ENCODE measurements at regions of chr19 and their contacts with region 1.

Region 1: GRCh38 chr19:13784731-13785452 is 10.4 kb upstream of the ZSWIM4 start:
- DNase-seq: peak; percentile 62
- ATAC-seq: peak; percentile 70
- H3K4me3 Mint-ChIP-seq: peak overlapping the region; percentile 41
- H3K27ac Mint-ChIP-seq: peak overlapping the region; percentile 76
- H3K4me1 Mint-ChIP-seq: peaks cover 44% of the 10 kb centered on the region
- H3K27me3 Mint-ChIP-seq: no peaks in the 10 kb centered on the region
- CTCF ChIP-seq: no peak

Region 2: GRCh38 chr19:13597640-13598039 is 187.3 kb before region 1 on chr19:
- CTCF ChIA-PET with region 1: interaction called, 3 read pairs
- POLR2A ChIA-PET with region 1: no interaction called
- intact Hi-C with region 1: loop called (anchors 10 kb)
- DNase-seq: no peak
- ATAC-seq: peak; percentile 95
- H3K4me3 Mint-ChIP-seq: no peak overlapping the region
- H3K27ac Mint-ChIP-seq: no peak overlapping the region
- H3K4me1 Mint-ChIP-seq: peaks cover 5% of the 10 kb centered on the region
- H3K27me3 Mint-ChIP-seq: peaks cover 11% of the 10 kb centered on the region
- CTCF ChIP-seq: no peak

Region 3: DNA sequence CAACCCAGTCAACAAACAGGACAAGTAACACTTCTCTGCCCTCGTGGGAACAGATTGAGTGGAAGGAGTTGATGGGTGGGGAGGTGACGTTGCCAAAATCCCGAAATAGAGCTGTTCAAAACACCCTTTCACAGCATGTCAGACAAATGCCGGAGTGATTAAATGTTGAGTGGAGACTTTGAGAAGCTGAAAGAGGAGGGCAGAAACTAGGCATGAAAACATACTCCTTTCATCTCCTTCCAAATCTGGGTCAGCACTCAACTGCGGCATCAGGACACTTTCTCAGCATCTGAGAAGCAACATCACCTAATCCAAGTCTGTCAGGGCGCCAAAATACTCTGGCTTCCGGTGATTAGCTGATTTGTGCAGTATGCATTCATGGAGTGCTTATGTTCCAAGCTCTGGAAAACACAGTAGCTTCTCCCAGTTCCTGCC is 72.1 kb before region 1 on chr19:
- CTCF ChIA-PET with region 1: no interaction called
- POLR2A ChIA-PET with region 1: no interaction called
- intact Hi-C with region 1: no loop called
- DNase-seq: no peak
- ATAC-seq: no peak
- H3K4me3 Mint-ChIP-seq: no peak overlapping the region
- H3K27ac Mint-ChIP-seq: no peak overlapping the region
- H3K4me1 Mint-ChIP-seq: no peaks in the 10 kb centered on the region
- H3K27me3 Mint-ChIP-seq: peaks cover 13% of the 10 kb centered on the region
- CTCF ChIP-seq: no peak

Region 4: DNA sequence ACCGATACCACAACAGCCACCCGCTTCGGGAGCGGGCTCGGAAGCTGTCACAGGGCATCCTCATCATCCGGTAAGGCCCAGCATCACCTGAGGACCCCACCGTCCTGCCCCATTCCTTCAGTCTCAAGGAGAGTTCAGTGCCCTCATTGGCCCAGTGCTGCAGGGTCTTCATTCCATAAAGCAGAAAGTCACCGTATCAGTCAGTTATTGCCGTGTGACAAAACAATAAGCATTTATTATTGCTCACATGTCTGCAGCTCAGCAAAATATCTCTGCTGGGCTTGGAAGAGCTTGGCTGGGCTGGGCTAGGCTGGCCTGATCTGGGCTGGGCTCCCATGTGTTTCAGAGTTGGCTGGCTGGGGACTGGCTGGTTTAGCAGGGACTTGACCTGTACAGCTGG is 28.7 kb before region 1 on chr19:
- CTCF ChIA-PET with region 1: no interaction called
- POLR2A ChIA-PET with region 1: no interaction called
- intact Hi-C with region 1: no loop called
- DNase-seq: no peak
- ATAC-seq: no peak
- H3K4me3 Mint-ChIP-seq: no peak overlapping the region
- H3K27ac Mint-ChIP-seq: no peak overlapping the region
- H3K4me1 Mint-ChIP-seq: no peaks in the 10 kb centered on the region
- H3K27me3 Mint-ChIP-seq: no peaks in the 10 kb centered on the region
- CTCF ChIP-seq: no peak

Region 5: DNA sequence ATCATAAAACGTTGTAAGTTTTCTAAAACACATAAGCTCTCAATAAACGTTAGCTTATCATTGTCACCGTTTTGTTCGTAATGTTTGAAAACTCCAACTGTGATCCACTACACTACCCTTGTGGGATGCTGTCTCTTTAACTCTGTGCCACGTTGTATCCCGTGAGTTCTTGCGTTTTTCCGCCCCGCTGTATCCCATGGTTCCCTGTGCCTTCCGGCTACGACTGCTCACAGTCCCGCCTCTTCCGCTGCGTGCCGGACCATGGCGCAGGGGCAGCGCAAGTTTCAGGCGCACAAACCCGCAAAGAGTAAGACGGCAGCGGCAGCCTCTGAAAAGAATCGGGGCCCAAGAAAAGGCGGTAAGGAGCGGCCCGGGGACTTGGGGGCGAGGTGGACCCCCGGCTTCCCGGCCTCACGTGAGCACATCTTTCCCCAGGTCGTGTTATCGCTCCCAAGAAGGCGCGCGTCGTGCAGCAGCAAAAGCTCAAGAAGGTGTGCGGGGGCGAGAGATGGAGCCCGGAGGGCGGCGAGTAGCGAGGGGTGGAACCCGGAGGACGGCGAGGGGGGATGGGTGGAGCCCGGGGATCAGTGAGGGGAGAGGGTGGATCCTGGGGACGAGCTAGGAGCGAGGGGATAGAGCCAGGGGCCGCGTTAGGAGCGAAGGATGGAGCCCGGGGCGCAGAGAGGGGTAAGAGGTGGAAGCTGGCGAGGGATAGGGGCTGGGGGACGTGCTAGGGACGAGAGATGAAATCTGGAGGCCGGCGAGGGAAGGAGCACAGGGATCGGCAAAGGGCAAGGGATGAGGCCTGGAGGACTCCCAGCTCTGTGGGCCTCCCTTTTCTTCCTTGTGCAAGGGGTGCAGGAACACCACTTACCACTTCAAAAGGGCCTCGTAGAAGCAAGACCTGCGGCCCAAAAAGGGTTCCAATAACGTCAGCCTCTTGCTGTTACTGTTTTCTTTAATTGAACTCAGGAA is 10.4 kb before region 1 on chr19 and contains the start of gene C19orf53:
- CTCF ChIA-PET with region 1: interaction called, 8 read pairs
- POLR2A ChIA-PET with region 1: interaction called, 20 read pairs
- intact Hi-C with region 1: no loop called
- DNase-seq: peak; percentile 86
- ATAC-seq: peak; percentile 99
- H3K4me3 Mint-ChIP-seq: peak within 1 kb of the TSS; percentile 100
- H3K27ac Mint-ChIP-seq: peak within 1 kb of the TSS; percentile 95
- H3K4me1 Mint-ChIP-seq: peaks cover 26% of the 10 kb centered on the region
- H3K27me3 Mint-ChIP-seq: no peaks in the 10 kb centered on the region
- CTCF ChIP-seq: no peak
- total RNA-seq, gene C19orf53: 74.9 and 76.1 TPM in 2 replicates

Region 6: GRCh38 chr19:13825489-13826391 is 40.8 kb after region 1 on chr19:
- CTCF ChIA-PET with region 1: no interaction called
- POLR2A ChIA-PET with region 1: interaction called, 10 read pairs
- intact Hi-C with region 1: no loop called
- DNase-seq: no peak
- ATAC-seq: peak; percentile 42
- H3K4me3 Mint-ChIP-seq: no peak overlapping the region
- H3K27ac Mint-ChIP-seq: no peak overlapping the region
- H3K4me1 Mint-ChIP-seq: peaks cover 2% of the 10 kb centered on the region
- H3K27me3 Mint-ChIP-seq: no peaks in the 10 kb centered on the region
- CTCF ChIP-seq: no peak

Region 7: DNA sequence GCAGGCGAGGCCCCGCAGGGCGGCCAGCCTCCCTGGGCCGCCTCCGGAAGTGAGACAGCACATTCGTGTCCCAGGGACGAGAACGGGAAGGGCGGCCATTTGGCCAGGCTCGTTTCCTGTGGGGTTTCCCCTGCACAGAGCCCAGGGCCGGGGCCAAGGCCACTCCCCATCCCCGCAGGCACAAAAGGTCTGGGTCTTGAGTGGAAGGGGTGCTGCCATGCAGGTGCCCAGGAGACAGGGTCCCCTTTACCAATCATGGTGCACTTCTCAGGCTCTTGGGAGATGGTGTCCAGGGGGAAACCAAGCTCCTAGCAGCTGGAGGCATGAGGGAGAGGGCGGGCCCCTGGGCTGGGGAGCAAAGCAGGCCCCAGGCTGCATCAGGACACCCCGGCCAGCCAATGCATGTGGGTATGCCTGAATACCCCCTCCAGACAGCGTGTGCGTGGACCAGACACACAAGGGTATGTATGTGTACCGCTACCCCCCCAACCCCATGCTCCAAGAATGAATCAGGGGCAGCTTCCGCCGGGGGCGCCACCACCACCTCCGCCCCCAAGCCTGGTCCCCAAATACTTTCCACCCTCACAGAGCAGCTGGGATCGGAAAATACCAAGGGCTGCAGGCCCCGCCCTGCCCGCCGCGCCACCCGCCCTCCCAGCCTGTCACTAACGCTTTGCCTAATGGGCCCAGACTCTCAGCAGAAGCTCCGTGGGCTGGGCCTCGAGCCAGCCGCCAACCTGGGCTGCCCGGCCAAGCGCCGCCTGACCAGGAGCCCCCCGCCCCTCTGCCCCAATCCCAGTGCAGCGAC is 54.4 kb after region 1 on chr19:
- CTCF ChIA-PET with region 1: interaction called, 4 read pairs
- POLR2A ChIA-PET with region 1: interaction called, 33 read pairs
- intact Hi-C with region 1: no loop called
- DNase-seq: peak; percentile 70
- ATAC-seq: peak; percentile 45
- H3K4me3 Mint-ChIP-seq: peak overlapping the region; percentile 86
- H3K27ac Mint-ChIP-seq: peak overlapping the region; percentile 92
- H3K4me1 Mint-ChIP-seq: peaks cover 75% of the 10 kb centered on the region
- H3K27me3 Mint-ChIP-seq: no peaks in the 10 kb centered on the region
- CTCF ChIP-seq: no peak

Region 8: DNA sequence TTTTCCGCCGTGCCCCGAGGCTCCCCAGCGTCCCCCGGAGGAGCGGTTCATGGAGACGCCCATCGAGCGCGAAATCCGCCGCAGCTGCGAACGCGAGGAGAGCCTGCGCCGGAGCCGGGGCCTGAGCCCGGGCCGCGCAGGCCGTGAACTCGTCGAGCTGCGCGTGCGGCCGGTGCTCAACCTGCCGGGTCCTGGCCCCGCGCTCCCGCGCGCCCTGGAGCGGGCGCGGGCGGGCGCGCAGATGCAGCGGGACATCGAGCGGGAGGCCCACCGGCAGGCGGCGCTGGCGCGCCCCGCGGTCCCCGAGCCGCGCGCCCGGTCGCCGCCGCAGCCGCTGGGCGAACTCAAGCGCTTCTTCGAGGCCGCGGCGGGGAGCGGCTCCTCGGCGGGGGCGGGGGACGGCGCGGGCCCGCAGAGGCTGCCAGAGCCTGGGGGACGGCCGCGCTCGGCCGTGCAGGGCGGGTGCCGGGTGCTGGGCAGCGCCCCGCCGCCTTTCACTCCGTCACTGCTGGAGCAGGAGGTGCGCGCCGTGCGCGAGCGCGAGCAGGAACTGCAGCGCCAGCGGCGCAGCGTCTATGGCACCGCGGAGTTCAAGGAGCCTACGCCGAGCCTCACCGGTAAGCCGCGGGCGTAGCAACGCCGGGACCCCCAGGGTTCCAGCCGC is 288.5 kb after region 1 on chr19:
- CTCF ChIA-PET with region 1: no interaction called
- POLR2A ChIA-PET with region 1: no interaction called
- intact Hi-C with region 1: loop called (anchors 5 kb)
- DNase-seq: peak; percentile 88
- ATAC-seq: peak; percentile 66
- H3K4me3 Mint-ChIP-seq: peak overlapping the region; percentile 86
- H3K27ac Mint-ChIP-seq: no peak overlapping the region
- H3K4me1 Mint-ChIP-seq: peaks cover 19% of the 10 kb centered on the region
- H3K27me3 Mint-ChIP-seq: no peaks in the 10 kb centered on the region
- CTCF ChIP-seq: no peak